BJ (cell line): ENCODE measurements at regions of chr17 and their contacts with region 1.

Region 1: DNA sequence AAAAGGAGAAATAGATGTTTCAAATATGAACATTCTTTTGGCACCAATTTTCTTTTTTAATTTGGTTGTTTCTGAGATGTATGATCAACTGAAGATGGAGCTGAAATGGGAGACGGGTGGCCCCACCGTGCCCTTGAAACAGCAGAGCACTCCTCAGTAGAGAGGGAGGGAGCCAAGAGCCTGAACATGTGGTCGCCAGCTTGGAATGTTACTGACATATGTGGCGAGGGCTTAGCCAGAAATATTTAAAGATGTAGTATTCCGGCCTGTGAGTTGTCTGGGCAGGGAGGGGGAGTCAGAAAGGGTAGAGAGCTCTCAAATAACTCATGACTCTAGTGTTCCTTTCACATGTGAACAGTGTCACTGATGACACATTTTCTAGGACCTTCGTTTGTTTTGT is 13.3 kb upstream of the MRC2 start:
- DNase-seq: peak; percentile 88
- H3K4me3 ChIP-seq: no peak overlapping the region
- H3K27me3 ChIP-seq: no peaks in the 10 kb centered on the region
- CTCF ChIP-seq: no peak

Region 2: GRCh38 chr17:62562656-62563055 is 51.5 kb before region 1 on chr17:
- CTCF ChIA-PET with region 1: no interaction called
- POLR2A ChIA-PET with region 1: interaction called, 14 read pairs
- DNase-seq: no peak
- H3K4me3 ChIP-seq: no peak overlapping the region
- H3K27me3 ChIP-seq: no peaks in the 10 kb centered on the region
- CTCF ChIP-seq: no peak

Region 3: GRCh38 chr17:62627219-62627910 is 13.2 kb after region 1 on chr17 and contains the start of gene MRC2:
- CTCF ChIA-PET with region 1: interaction called, 3 read pairs
- POLR2A ChIA-PET with region 1: interaction called, 18 read pairs
- DNase-seq: no peak
- H3K4me3 ChIP-seq: peak within 1 kb of the TSS; percentile 83
- H3K27me3 ChIP-seq: no peaks in the 10 kb centered on the region
- CTCF ChIP-seq: no peak
- polyA plus RNA-seq, gene MRC2: 90.1 and 271 TPM in 2 replicates

Region 4: DNA sequence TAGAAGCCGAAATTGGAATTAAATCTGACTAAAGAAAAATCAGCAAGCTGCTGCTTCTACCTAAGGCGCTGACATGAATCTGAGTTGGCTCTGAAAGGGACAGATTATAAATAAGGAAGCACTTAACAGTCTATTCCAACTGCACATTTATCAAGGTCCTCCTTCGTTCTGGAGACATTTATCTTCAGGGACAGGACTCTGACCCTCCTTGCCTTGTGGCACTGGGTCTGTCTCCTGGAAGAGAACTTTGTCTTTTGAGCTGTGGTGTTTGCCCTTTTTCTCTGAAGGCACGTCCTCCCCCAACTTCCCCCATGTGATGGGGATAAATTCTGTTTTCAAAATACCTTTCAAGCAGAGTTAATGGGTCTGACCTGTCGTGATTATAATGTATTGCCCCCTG is 241.0 kb after region 1 on chr17:
- CTCF ChIA-PET with region 1: no interaction called
- POLR2A ChIA-PET with region 1: interaction called, 10 read pairs
- DNase-seq: no peak
- H3K4me3 ChIP-seq: no peak overlapping the region
- H3K27me3 ChIP-seq: no peaks in the 10 kb centered on the region
- CTCF ChIP-seq: no peak

Region 5: DNA sequence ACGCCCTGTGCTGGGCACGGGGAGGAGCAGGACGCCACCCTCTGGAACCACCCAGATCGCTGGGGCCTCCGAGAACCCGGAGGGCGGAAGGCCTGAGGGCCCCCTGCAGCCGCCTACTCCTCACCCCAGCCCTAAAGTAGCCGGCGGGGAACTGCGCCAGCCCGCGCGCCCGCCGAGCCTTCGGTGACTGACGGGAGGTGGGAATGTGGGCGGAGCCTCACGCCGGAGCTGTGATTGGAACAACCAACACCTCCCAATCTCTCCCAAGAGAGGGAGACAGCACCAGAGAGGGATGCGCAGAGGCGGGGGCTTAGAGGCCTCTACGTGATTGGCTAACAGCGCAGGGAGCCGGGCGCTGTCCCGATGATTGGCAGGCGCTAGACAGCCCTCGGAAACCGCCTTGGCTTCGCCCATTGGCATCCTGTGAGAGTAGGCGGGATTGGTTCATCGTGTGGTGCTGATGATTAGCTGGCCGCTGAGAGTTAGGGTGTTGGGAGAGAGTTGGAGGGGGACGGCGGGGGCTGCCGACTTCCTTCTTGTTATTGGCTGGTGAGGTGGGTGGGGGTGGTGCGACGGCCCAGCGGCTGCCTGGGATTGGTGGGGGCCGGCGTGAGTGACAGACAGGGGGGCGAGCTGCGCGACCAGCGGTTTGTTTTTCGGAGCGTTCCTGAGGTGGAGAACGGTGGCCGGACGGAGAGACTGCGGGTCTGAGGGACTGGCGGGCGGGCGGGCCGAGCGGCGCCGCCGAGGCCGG is 1007.8 kb after region 1 on chr17 and contains the start of gene MAP3K3:
- CTCF ChIA-PET with region 1: no interaction called
- POLR2A ChIA-PET with region 1: interaction called, 15 read pairs
- DNase-seq: peak; percentile 99
- H3K4me3 ChIP-seq: peak within 1 kb of the TSS; percentile 52
- H3K27me3 ChIP-seq: no peaks in the 10 kb centered on the region
- CTCF ChIP-seq: peak; percentile 27; the same call in 1 of the 2 replicates
- polyA plus RNA-seq, gene MAP3K3: 20.2 and 32.5 TPM in 2 replicates